Stomach (tissue), 19 donors: ENCODE measurements at regions of chr2 and their contacts with region 1.

Region 1: GRCh38 chr2:112726497-112727190 is 5.8 kb downstream of the NT5DC4 start:
- DNase-seq: peak; percentile 95 to 96
- H3K4me3 ChIP-seq: no peak overlapping the region
- H3K27ac ChIP-seq: no peak overlapping the region
- H3K4me1 ChIP-seq: peaks cover 0 to 9% (median 4%) of the 10 kb centered on the region in 4 donors
- H3K27me3 ChIP-seq: peaks cover 0 to 4% (median 0%) of the 10 kb centered on the region in 3 donors
- CTCF ChIP-seq: peak in 5 of 7 experiments; percentile 83 to 98 (median 94)
- EP300 ChIP-seq: no peak
- POLR2A ChIP-seq: no peak

Region 2: GRCh38 chr2:112601751-112602150 is 124.9 kb before region 1 on chr2:
- intact Hi-C with region 1: loop called (anchors 5 kb)
- DNase-seq: no peak
- H3K4me3 ChIP-seq: no peak overlapping the region
- H3K27ac ChIP-seq: no peak overlapping the region
- H3K4me1 ChIP-seq: peaks cover 0 to 15% (median 3%) of the 10 kb centered on the region in 4 donors
- H3K27me3 ChIP-seq: no peaks in the 10 kb centered on the region
- CTCF ChIP-seq: no peak
- EP300 ChIP-seq: no peak
- POLR2A ChIP-seq: no peak

Region 3: GRCh38 chr2:112626604-112627059 is 100.0 kb before region 1 on chr2:
- intact Hi-C with region 1: loop called (anchors 5 kb)
- DNase-seq: peak; percentile 64 to 81
- H3K4me3 ChIP-seq: peak overlapping the region in 3 of 4 donors; percentile 2 to 22 (median 21)
- H3K27ac ChIP-seq: peak overlapping the region; percentile 36 to 88 (median 70)
- H3K4me1 ChIP-seq: peaks cover 18 to 50% (median 19%) of the 10 kb centered on the region in 4 donors
- H3K27me3 ChIP-seq: peaks cover 0 to 13% (median 0%) of the 10 kb centered on the region in 3 donors
- CTCF ChIP-seq: peak in 5 of 7 experiments; percentile 60 to 81 (median 62)
- EP300 ChIP-seq: no peak
- POLR2A ChIP-seq: no peak

Region 4: GRCh38 chr2:112666764-112667122 is 59.9 kb before region 1 on chr2:
- intact Hi-C with region 1: no loop called
- DNase-seq: no peak
- H3K4me3 ChIP-seq: no peak overlapping the region
- H3K27ac ChIP-seq: no peak overlapping the region
- H3K4me1 ChIP-seq: peaks cover 0 to 4% (median 0%) of the 10 kb centered on the region in 4 donors
- H3K27me3 ChIP-seq: no peaks in the 10 kb centered on the region
- CTCF ChIP-seq: no peak
- EP300 ChIP-seq: no peak
- POLR2A ChIP-seq: no peak